ENCODE measurements at regions of chr3 and their contacts with region 1.

Region 1: GRCh38 chr3:48739955-48740823 is 23.2 kb upstream of the IP6K2 start:
- DNase-seq: peak; percentile 86
- ATAC-seq: peak; percentile 94
- H3K4me3 ChIP-seq: peak overlapping the region; percentile 45 to 65 (median 53)
- H3K27ac ChIP-seq: peak overlapping the region; percentile 79
- H3K4me1 ChIP-seq: peaks cover 52% of the 10 kb centered on the region
- H3K27me3 ChIP-seq: no peaks in the 10 kb centered on the region
- CTCF ChIP-seq: peak; percentile 96
- EP300 ChIP-seq: no peak
- POLR2A ChIP-seq: peak; percentile 54 to 70; a peak in 3 of 4 replicates
- RAD21 ChIP-seq: peak; percentile 80

Region 2: GRCh38 chr3:48679411-48680391 is 60.5 kb before region 1 on chr3:
- CTCF ChIA-PET with region 1: no interaction called
- POLR2A ChIA-PET with region 1: no interaction called
- in situ Hi-C with region 1: no loop called
- intact Hi-C with region 1: no loop called
- DNase-seq: no peak
- ATAC-seq: no peak
- H3K4me3 ChIP-seq: no peak overlapping the region
- H3K27ac ChIP-seq: no peak overlapping the region
- H3K4me1 ChIP-seq: peaks cover 19% of the 10 kb centered on the region
- H3K27me3 ChIP-seq: no peaks in the 10 kb centered on the region
- CTCF ChIP-seq: no peak
- EP300 ChIP-seq: no peak
- POLR2A ChIP-seq: no peak
- RAD21 ChIP-seq: no peak

Region 3: DNA sequence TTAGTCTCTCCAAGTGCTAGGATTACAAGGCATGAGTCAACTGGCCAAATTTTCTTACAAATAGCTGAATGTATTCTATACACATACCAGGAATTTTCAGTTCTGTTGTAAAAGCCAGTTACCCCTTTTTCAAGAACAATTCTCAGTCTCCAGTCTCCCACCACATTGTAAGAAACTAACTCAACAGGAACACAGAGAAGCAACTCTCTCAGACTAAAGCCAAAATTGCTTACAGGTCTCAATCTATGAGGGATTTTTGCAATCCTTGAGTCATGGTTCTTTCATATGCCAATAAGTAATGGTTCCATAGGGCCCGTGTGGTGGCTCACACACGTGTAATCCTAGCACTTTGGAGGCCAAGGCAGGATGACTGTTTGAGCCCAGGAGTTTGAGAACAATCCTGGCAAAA is 31.7 kb before region 1 on chr3:
- CTCF ChIA-PET with region 1: no interaction called
- POLR2A ChIA-PET with region 1: interaction called, 10 read pairs
- in situ Hi-C with region 1: no loop called
- intact Hi-C with region 1: no loop called
- DNase-seq: no peak
- ATAC-seq: no peak
- H3K4me3 ChIP-seq: no peak overlapping the region
- H3K27ac ChIP-seq: no peak overlapping the region
- H3K4me1 ChIP-seq: peaks cover 35% of the 10 kb centered on the region
- H3K27me3 ChIP-seq: no peaks in the 10 kb centered on the region
- CTCF ChIP-seq: no peak
- EP300 ChIP-seq: no peak
- POLR2A ChIP-seq: no peak
- RAD21 ChIP-seq: no peak

Region 4: DNA sequence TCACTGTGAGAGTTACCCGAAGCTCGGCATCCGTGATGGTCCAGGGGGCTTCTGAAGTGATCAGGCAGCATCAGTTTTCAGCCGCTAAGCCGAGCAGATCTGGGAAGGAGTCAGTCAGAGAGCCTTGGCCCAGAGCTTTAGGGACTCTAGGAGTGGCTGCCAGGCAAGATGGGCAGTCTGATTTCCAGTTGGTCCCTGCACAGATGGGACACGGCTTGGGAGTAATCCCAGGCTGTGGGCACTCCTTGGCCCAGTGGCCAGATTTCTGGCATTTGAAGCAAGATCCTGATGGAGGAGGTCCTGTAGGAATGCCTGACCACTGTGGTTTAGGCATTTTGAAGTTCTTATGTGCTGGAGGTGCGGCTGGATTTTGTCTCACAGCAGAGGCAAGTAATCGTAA is 12.7 kb before region 1 on chr3:
- CTCF ChIA-PET with region 1: no interaction called
- POLR2A ChIA-PET with region 1: interaction called, 11 read pairs
- in situ Hi-C with region 1: no loop called
- intact Hi-C with region 1: no loop called
- DNase-seq: no peak
- ATAC-seq: no peak
- H3K4me3 ChIP-seq: no peak overlapping the region
- H3K27ac ChIP-seq: no peak overlapping the region
- H3K4me1 ChIP-seq: peaks cover 5% of the 10 kb centered on the region; the same call in 1 of the 2 replicates
- H3K27me3 ChIP-seq: peaks cover 0 to 4% of the 10 kb centered on the region in 2 experiments; a peak in 1 of 5 replicates
- CTCF ChIP-seq: no peak
- EP300 ChIP-seq: no peak
- POLR2A ChIP-seq: no peak
- RAD21 ChIP-seq: no peak

Region 5: DNA sequence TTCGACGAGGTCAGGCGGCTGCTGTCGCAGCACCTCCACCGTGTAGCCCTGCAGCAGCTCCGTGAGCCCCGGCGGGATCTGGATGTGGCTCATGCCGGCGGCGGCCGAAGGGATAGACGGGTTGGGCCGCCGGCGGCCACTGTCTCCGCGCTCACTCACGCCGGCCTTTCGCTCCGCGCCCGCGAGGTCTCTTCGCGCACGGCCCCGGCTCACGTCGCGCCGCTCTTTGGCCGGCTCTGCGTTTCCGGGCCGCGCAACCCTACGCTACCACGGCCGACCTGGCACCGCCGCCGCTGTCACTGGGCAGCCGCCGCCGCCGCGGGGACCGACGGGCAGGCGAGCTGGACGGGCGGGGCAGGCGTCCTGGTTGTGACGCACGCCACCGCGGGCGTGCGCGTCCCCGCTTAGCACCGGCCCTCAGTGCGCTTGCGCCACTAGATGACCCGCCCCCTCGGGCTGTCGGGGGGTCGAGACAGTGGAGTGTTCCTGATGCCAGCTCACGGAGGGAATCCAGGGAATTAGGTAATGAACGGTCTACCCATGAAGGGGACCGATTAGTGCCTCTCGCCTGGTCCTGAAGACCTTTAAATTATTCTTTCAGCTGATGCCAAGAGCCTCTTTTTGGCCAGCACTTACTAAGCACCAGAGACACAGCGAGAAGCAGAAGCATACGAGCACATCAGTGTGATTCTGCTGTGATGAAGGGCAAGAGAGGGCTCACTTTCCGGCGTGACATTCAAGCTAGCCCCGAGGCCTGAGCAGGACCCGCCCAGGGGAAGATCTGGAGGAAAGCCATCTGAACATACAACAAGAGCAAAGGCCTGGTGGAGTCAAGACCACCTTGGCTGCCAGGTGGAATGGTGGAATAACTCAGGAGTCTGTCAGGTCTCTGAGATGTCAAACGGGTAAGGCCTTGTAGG is 107.6 kb after region 1 on chr3 and contains the start of gene PRKAR2A:
- CTCF ChIA-PET with region 1: no interaction called
- POLR2A ChIA-PET with region 1: interaction called, 10 read pairs
- in situ Hi-C with region 1: no loop called
- intact Hi-C with region 1: no loop called
- DNase-seq: peak; percentile 73
- ATAC-seq: peak; percentile 92
- H3K4me3 ChIP-seq: peak within 1 kb of the TSS; percentile 67 to 89 (median 78)
- H3K27ac ChIP-seq: peak within 1 kb of the TSS; percentile 88
- H3K4me1 ChIP-seq: peaks cover 26% of the 10 kb centered on the region
- H3K27me3 ChIP-seq: no peaks in the 10 kb centered on the region
- CTCF ChIP-seq: no peak; the same call in 1 of the 2 replicates
- EP300 ChIP-seq: no peak
- POLR2A ChIP-seq: peak; percentile 58 to 89; a peak in 3 of 4 replicates
- RAD21 ChIP-seq: peak; percentile 31
- total RNA-seq, gene PRKAR2A: 29.2 and 38.5 TPM in 2 replicates

Region 6: DNA sequence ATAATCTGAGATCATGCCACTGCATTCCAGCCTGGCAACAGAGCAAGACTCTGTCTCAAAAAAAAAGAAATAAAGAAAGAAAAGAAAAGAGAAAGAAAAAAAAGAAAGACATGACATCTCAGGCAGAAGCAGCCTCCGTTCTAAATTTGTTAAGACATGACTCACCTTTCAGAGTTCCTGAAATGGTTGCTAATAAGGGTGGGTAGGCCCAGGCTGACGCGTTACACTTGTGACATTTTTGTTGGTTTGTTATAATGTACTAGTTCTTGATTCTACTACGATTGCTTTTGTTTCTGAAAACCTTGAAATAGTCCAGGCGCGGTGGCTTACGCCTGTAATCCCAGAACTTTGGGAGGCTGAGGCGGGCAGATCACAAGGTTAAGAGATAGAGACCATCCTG is 137.5 kb after region 1 on chr3:
- CTCF ChIA-PET with region 1: no interaction called
- POLR2A ChIA-PET with region 1: no interaction called
- in situ Hi-C with region 1: no loop called
- intact Hi-C with region 1: no loop called
- DNase-seq: no peak
- ATAC-seq: no peak
- H3K4me3 ChIP-seq: no peak overlapping the region
- H3K27ac ChIP-seq: no peak overlapping the region
- H3K4me1 ChIP-seq: peaks cover 25% of the 10 kb centered on the region
- H3K27me3 ChIP-seq: no peaks in the 10 kb centered on the region
- CTCF ChIP-seq: no peak
- EP300 ChIP-seq: no peak
- POLR2A ChIP-seq: no peak
- RAD21 ChIP-seq: no peak

Region 7: DNA sequence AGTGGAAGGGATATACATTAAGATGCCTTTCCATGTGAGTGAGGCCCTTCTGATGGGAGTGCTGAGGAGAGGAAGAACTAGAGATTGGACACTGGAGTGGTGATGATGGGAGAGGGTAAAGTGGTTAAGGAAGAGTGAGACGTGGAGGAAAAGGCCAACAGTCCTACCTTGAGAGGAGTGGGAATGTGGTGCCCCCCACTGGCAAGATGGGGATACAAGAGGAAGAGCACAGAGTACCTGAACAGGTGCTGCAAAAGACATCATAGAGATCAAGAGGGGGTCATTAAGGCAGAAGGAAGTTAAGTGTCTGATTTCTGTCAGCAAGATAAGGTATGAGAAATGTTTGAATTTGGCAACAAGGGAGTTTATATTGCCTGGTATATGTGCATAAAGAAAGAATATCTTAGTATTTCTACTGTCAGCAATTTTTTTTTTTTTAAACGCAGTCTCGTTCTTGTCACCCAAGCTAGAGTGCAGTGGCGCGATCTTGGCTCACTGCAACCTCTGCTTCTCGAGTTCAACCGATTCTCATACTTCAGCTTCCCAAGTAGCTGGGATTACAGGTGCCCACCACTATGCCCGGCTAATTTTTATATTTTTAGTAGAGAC is 212.4 kb after region 1 on chr3:
- CTCF ChIA-PET with region 1: interaction called, 4 read pairs
- POLR2A ChIA-PET with region 1: no interaction called
- in situ Hi-C with region 1: no loop called
- intact Hi-C with region 1: loop called (anchors 2 kb)
- DNase-seq: peak; percentile 45
- ATAC-seq: peak; percentile 85
- H3K4me3 ChIP-seq: no peak overlapping the region
- H3K27ac ChIP-seq: no peak overlapping the region
- H3K4me1 ChIP-seq: no peaks in the 10 kb centered on the region
- H3K27me3 ChIP-seq: no peaks in the 10 kb centered on the region
- CTCF ChIP-seq: peak; percentile 80
- EP300 ChIP-seq: no peak
- POLR2A ChIP-seq: no peak
- RAD21 ChIP-seq: no peak